ENCODE measurements at regions of chr10 and their contacts with region 1.

Region 1: GRCh38 chr10:28179006-28179742 is 123.7 kb downstream of the MPP7 start:
- DNase-seq: no peak
- ATAC-seq: peak; percentile 57

Region 2: GRCh38 chr10:27742195-27743011 is 436.8 kb before region 1 on chr10:
- intact Hi-C with region 1: loop called (anchors 2 kb)
- DNase-seq: peak; percentile 88
- ATAC-seq: peak; percentile 97

Region 3: GRCh38 chr10:28241741-28242399 is 62.7 kb after region 1 on chr10:
- intact Hi-C with region 1: no loop called
- DNase-seq: no peak
- ATAC-seq: peak; percentile 67